ENCODE measurements at regions of chr12 and their contacts with region 1.

Region 1: DNA sequence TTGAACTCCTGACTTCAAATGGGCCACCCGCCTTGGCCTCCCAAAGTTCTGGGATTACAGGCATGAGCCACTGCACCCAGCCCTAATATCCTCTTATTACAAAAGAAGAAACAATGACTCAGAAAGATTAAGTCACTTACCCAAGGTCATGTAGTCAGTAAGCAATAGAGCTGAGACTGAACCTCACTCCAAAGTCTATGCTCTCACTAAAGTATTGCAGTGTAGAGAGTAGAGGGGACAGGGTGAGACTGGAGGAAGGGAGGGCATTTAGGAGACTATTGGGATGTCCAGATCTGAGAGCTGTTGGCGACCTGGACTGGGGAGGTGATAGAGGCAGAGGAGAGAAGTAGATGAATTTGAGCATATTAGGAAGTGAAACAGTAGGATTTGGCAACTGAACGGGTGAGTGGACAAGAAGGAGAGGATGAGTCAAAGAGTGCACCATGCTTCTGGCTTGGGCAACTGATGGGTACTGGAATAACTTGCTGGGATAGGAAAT is 11.8 kb downstream of the P2RX7 start:
- DNase-seq: no peak

Region 2: DNA sequence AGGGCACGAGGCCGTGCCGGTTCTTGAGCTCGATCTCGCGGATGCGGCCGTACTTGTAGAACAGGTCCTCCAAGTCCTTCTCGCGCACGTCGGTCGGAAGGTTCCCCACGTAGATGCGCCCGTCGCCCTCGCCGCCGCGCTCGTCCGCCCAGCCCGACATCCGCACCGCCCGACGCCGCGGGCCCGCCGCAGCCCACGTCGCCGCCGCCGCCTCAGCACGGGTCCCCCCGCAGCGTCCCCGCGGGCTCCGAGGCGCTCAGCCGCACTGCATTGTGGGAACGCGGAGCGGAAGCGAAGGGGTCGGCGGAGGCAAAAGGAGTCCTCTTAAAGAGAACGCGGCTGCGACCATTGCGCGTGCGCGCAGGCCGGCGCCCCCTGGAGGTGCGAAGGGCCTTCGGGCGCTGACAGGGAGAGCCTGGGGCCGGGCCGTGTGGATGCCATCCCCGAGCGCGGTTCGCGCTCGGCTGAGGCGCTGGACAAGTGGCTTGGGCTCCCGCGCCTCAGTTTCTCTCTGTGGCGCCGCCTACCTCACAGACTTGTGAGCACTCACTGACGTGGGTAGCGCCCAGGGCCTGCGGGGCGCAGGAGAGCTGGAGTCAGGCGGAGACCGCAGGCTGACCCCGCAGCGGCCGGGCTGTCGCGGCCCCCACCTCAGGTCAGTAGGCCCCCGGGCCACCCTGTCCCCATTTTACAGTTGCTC is 674.9 kb before region 1 on chr12 and contains the start of gene SRSF9:
- intact Hi-C with region 1: no loop called
- DNase-seq: peak; percentile 88 to 99 (median 96)

Region 3: DNA sequence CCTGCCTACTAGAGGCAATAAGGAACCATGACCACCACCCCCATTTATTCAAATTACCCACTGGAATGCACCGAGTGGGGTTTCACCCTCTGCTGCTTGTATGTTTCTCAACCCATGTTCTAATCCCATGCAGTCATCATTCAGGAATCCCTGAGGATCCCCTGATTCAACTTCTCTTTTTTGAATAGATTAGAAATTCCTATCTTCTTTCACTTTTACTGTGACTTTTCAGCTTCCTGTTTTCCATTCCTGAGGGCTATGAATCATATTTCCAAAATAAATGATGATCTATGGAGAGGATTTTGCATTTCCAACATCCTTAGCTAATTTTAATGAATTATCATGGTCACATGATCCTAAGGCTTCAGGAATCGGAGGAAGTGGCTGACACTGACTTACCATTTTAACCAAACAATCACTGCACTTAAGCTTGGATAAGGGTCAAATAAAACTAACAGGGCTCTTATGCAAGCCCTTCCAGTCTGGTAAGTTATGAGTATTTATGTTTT is 46.1 kb after region 1 on chr12:
- intact Hi-C with region 1: loop called (anchors 10 kb)
- DNase-seq: no peak

Region 4: DNA sequence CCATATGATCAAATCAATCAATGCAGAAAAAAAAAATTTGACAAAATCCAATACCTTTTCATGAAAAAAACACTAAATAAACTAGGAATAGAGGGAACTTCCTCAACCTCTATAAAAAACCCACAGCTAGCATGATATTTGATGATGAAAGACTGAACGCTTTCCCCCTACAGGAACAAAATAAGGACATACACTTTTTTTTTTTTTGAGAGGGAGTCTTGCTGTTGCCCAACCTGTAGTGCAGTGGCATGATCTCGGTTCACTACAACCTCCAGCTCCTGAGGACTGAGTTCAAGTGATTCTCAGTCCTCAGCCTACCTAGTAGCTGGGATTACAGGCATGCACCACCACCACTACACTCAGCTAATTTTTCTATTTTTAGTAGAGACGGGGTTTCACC is 170.0 kb after region 1 on chr12:
- intact Hi-C with region 1: no loop called
- DNase-seq: no peak